HEK293T (cell line): ENCODE measurements at regions of chr3 and their contacts with region 1.

Region 1: GRCh38 chr3:132253262-132253878 is 63.8 kb upstream of the ACP3 start:
- DNase-seq: peak; percentile 61

Region 2: DNA sequence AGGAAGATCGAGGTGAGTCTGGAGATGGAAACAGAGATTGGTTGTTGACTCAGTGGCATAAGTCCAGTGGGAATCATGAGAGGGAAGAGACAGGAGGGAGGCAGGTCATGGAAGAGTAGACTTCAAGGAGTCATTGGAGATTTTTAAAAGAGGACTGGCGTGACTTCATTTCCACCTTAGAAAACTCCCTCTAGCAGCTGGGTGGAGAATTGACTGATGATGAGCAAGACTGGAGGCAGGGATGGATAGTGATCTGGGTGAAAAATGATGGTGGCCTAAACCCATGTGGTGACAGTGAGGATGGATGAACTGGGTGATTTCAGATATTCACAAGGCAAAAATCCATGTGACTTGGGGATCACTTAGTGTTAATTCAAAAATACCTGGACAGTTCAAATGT is 195.5 kb before region 1 on chr3:
- CTCF ChIA-PET with region 1: no interaction called
- POLR2A ChIA-PET with region 1: no interaction called
- DNase-seq: no peak

Region 3: DNA sequence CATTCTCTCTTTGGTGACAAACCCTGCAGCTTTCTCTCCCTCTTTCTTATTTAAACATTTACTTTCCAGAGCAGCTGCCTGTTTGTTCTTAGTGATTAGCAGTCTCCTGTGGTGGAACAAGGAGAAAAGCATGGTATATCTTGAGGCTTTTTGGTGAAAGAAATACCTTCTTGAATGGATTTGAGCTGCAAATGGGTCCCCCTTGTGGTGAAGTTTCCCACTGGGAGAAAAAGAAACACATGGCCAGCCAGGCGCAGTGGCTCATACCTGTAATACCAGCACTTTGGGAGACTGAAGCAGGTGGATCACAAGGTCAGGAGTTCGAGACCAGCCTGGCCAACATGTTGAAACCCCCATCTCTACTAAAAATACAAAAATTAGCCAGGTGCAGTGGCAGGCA is 15.6 kb after region 1 on chr3:
- CTCF ChIA-PET with region 1: no interaction called
- POLR2A ChIA-PET with region 1: no interaction called
- DNase-seq: peak; percentile 23

Region 4: DNA sequence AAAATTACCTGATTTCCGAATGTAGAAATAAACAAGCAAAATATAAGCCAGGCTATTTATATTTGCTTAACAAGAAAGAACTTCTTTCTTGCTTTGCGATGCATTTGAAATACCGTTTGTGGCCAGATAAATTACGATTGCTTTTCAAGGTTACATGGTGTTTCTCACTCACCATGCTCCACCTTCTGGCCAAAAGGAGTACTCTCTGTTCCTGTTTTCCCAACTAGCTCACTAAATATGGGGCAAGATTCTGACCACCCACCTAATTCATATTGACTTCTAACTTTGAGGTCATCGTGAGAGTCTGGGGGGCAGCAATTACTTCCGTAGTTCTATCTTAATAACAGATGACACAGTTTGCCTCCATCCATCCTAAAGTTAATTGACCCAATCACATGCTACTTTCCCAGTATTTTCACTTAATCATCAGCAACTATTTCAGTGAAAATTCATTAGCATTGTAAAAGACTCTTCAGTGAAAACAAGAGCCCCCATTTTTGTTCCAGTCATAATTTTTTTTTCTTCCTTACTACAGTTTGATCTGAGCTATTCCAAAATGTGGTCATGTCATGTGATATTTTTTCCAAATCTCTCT is 89.7 kb after region 1 on chr3:
- CTCF ChIA-PET with region 1: interaction called, 26 read pairs
- POLR2A ChIA-PET with region 1: interaction called, 3 read pairs
- DNase-seq: peak; percentile 54